Activated CD4-positive, alpha-beta T cell treated with anti-CD3 and anti-CD28 coated beads, Interleukin-2, amount 10 ng/mL, durations not matched to agents 24 days and 14 days (primary cell): ENCODE measurements at regions of chr10 and their contacts with region 1.

Region 1: DNA sequence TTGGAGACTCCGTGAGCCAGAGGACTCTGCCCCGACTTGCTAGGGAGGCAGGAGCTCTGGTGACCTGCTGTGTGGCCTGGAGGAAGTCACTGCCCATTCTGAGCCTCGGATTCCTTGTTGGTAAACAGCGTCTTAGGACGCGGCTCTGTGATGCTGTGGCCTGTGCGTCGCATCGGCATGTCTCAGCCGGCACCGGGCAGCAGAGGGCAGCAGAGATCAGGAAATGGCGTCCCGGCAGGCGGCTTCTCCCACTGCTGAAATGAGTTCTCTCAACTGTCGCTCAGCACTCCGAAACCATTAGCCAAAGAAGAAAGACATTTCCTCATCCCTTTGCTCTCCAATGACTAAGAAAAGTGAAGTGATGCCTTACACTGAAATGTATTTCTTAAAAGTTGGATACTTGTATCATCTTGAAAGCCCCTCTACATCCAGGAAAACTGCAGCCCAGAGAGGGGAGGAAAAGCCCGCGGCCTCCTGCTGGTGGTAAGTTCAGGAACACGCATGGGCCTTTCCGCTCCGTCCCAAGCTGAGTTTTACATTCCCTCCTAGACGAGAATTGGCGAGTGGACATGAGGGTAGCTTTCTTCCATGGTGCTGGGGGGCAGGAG is 91.7 kb downstream of the WDR11 start:
- DNase-seq: peak; percentile 93
- H3K4me3 Mint-ChIP-seq: peak overlapping the region; percentile 21
- H3K27ac Mint-ChIP-seq: no peak overlapping the region
- H3K4me1 Mint-ChIP-seq: peaks cover 6% of the 10 kb centered on the region
- H3K27me3 Mint-ChIP-seq: peaks cover 2% of the 10 kb centered on the region

Region 2: GRCh38 chr10:120962756-120963593 is 20.1 kb after region 1 on chr10:
- intact Hi-C with region 1: no loop called
- DNase-seq: no peak
- H3K4me3 Mint-ChIP-seq: no peak overlapping the region
- H3K27ac Mint-ChIP-seq: no peak overlapping the region
- H3K4me1 Mint-ChIP-seq: no peaks in the 10 kb centered on the region
- H3K27me3 Mint-ChIP-seq: peaks cover 2% of the 10 kb centered on the region

Region 3: DNA sequence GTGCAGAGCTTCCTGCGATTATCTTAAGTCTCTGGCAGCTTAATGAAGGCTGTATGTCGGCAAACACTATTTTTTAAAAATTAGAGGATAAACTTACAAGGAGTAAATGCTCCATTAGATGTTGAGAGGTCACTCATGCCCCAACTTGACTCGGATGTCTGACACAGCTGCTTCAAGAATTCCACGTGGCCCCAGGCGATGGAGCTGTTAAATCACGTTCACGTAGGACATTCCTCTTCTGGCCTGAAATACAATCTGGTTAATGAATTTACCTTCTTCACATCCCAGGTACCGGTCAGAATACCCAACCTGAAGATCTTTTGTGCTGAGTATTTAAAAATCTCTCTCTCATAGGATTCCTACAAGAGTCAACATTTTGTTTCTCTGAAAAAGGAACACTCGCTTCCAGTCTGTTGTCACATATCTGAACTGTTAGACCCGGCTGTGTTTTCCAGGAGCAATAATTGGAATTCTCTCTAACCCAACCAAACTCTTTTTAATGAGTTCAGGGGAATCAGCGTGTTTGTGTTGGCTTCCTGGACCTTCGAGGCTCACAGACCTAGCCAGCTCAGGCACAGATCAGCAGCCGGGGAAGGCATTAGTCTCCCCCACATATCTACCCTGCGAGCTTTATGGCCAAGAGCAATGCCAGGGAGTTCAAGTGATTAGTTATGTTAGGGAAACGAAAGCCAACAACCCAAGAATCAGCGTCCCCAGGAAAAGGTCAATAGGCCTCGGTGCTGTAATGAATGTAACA is 370.4 kb after region 1 on chr10:
- intact Hi-C with region 1: no loop called
- DNase-seq: no peak
- H3K4me3 Mint-ChIP-seq: no peak overlapping the region
- H3K27ac Mint-ChIP-seq: no peak overlapping the region
- H3K4me1 Mint-ChIP-seq: no peaks in the 10 kb centered on the region
- H3K27me3 Mint-ChIP-seq: no peaks in the 10 kb centered on the region

Region 4: DNA sequence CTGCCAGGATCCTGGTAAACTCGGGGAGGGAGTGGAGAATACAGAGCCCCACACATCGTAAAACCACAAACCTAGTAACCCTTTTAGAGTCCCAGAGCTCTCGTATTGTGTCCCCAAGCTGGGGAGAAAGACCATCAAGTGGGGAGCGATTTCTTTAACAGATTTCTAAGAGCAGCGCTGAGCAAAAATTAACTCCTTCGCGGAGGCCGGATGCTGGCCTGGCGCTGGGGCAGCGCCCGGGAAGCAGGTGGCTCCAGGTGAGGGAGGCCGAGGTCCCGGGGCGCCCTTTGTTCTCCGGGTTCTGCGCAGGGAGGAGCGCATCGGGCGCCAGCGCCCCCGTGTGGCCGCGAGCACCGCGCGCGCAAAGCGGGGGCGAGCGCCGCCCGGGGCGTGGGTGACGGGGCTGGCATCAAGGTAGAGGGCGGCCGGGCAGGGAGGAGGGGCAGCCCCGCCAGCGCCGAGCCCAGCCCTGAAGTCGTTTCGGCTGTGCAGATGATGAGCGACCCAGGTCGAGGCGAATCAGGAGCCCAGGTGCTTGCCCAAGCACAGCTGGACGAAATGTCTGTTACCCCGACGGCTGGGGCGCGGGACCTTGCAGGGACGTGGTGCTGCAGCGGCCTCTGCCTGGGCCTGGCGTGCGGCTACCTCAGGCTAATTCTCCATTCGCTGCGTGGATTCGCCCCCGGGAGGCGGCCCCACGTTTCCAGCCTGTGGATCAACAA is 665.7 kb after region 1 on chr10:
- intact Hi-C with region 1: loop called (anchors 2 kb)
- DNase-seq: peak; percentile 80
- H3K4me3 Mint-ChIP-seq: no peak overlapping the region
- H3K27ac Mint-ChIP-seq: no peak overlapping the region
- H3K4me1 Mint-ChIP-seq: no peaks in the 10 kb centered on the region
- H3K27me3 Mint-ChIP-seq: peaks cover 12% of the 10 kb centered on the region